Naive thymus-derived CD4-positive, alpha-beta T cell (primary cell): ENCODE measurements at regions of chr2 and their contacts with region 1.

Region 1: DNA sequence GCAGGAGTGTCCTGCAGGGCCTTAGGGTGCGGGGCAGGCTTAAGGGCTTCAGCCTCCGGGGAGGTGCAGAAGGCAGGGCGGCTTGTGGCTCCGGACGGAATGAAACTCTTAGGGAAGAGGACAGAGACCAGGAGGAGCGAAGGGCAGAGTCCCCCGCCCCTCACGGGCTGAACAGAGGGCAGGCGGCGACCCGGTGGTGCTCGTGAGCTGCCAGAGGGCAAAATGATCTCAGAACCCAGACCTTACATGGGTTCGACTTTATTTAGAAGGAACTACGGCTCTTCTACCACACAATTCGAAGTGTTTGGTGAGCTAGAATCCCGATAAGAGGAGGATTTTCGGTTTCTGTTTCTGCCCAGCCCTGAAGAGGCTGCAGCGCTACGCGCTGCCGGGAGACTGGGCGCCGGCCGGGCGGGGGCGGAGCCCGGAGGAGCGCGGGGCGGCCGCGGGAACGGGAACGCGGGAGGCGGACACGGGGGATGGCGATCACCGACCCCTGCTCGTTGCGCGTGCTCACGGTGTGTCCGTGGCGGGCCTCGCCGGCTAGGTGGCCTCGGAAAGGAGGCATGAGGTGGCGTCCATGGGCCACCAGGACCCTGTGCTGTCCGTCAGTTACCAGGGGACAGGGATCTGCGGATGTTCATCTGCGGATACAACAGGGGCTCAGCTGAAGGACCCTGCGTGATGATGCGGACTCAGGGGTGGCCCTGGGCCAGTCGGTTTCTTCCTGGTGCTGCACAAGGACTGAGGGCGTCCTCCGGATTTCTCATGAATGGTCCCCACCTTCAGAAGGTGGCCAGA is 4.2 kb upstream of the SP100 start:
- DNase-seq: peak; percentile 47 to 81 (median 61)
- ATAC-seq: peak; percentile 80
- H3K4me3 ChIP-seq: peak overlapping the region; percentile 96
- H3K4me3 Mint-ChIP-seq: peak overlapping the region; percentile 94 to 100 (median 100)
- H3K27ac ChIP-seq: peak overlapping the region; percentile 85
- H3K27ac Mint-ChIP-seq: peak overlapping the region; percentile 97 to 100 (median 99)
- H3K4me1 ChIP-seq: peaks cover 26 to 29% of the 10 kb centered on the region in 2 donors
- H3K4me1 Mint-ChIP-seq: peaks cover 30 to 92% (median 84%) of the 10 kb centered on the region in 7 donors
- H3K27me3 ChIP-seq: no peaks in the 10 kb centered on the region
- H3K27me3 Mint-ChIP-seq: no peaks in the 10 kb centered on the region

Region 2: DNA sequence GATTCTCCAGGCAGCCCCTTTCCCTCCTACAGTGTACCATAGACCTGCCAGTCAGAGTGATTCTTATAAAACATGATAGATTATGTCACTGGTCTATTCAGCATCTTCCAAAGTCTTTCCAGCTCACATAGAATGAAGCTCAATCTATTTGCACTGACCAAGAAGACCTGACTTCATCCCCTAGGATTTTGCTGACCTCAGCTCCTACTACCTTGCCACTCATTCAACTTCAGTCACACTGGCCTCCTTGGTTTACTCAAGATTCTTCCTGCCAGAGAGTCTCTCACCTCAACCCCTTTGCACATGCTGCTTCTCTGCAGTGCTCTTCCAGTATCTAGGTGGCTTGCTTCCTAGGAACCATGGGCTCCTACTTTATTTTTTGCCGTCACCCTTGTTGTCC is 1533.6 kb before region 1 on chr2:
- CTCF ChIA-PET with region 1: no interaction called
- POLR2A ChIA-PET with region 1: no interaction called
- intact Hi-C with region 1: no loop called
- DNase-seq: no peak
- ATAC-seq: no peak
- H3K4me3 ChIP-seq: no peak overlapping the region
- H3K4me3 Mint-ChIP-seq: no peak overlapping the region
- H3K27ac ChIP-seq: no peak overlapping the region
- H3K27ac Mint-ChIP-seq: peak overlapping the region in 1 of 9 donors; percentile 40
- H3K4me1 ChIP-seq: no peaks in the 10 kb centered on the region
- H3K4me1 Mint-ChIP-seq: no peaks in the 10 kb centered on the region
- H3K27me3 ChIP-seq: no peaks in the 10 kb centered on the region
- H3K27me3 Mint-ChIP-seq: no peaks in the 10 kb centered on the region

Region 3: GRCh38 chr2:229947544-229947943 is 464.2 kb before region 1 on chr2:
- CTCF ChIA-PET with region 1: no interaction called
- POLR2A ChIA-PET with region 1: no interaction called
- intact Hi-C with region 1: no loop called
- DNase-seq: no peak
- ATAC-seq: no peak
- H3K4me3 ChIP-seq: no peak overlapping the region
- H3K4me3 Mint-ChIP-seq: no peak overlapping the region
- H3K27ac ChIP-seq: no peak overlapping the region
- H3K27ac Mint-ChIP-seq: peak overlapping the region in 1 of 9 donors; percentile 4
- H3K4me1 ChIP-seq: no peaks in the 10 kb centered on the region
- H3K4me1 Mint-ChIP-seq: peaks cover 0 to 4% (median 0%) of the 10 kb centered on the region in 7 donors
- H3K27me3 ChIP-seq: no peaks in the 10 kb centered on the region
- H3K27me3 Mint-ChIP-seq: no peaks in the 10 kb centered on the region

Region 4: GRCh38 chr2:230219419-230220331 is 192.1 kb before region 1 on chr2 and contains the start of gene SP110:
- CTCF ChIA-PET with region 1: interaction called, 3 read pairs
- POLR2A ChIA-PET with region 1: interaction called, 11 read pairs
- intact Hi-C with region 1: loop called (anchors 1 to 2 kb)
- DNase-seq: peak; percentile 38 to 84 (median 81)
- ATAC-seq: peak; percentile 93
- H3K4me3 ChIP-seq: peak within 1 kb of the TSS; percentile 95
- H3K4me3 Mint-ChIP-seq: peak within 1 kb of the TSS; percentile 89 to 100 (median 99)
- H3K27ac ChIP-seq: peak within 1 kb of the TSS; percentile 83
- H3K27ac Mint-ChIP-seq: peak within 1 kb of the TSS; percentile 94 to 100 (median 99)
- H3K4me1 ChIP-seq: peaks cover 22 to 36% of the 10 kb centered on the region in 2 donors
- H3K4me1 Mint-ChIP-seq: peaks cover 44 to 75% (median 67%) of the 10 kb centered on the region in 7 donors
- H3K27me3 ChIP-seq: no peaks in the 10 kb centered on the region
- H3K27me3 Mint-ChIP-seq: no peaks in the 10 kb centered on the region
- total RNA-seq, gene SP110: 97.5 to 182 (median 117) TPM

Region 5: DNA sequence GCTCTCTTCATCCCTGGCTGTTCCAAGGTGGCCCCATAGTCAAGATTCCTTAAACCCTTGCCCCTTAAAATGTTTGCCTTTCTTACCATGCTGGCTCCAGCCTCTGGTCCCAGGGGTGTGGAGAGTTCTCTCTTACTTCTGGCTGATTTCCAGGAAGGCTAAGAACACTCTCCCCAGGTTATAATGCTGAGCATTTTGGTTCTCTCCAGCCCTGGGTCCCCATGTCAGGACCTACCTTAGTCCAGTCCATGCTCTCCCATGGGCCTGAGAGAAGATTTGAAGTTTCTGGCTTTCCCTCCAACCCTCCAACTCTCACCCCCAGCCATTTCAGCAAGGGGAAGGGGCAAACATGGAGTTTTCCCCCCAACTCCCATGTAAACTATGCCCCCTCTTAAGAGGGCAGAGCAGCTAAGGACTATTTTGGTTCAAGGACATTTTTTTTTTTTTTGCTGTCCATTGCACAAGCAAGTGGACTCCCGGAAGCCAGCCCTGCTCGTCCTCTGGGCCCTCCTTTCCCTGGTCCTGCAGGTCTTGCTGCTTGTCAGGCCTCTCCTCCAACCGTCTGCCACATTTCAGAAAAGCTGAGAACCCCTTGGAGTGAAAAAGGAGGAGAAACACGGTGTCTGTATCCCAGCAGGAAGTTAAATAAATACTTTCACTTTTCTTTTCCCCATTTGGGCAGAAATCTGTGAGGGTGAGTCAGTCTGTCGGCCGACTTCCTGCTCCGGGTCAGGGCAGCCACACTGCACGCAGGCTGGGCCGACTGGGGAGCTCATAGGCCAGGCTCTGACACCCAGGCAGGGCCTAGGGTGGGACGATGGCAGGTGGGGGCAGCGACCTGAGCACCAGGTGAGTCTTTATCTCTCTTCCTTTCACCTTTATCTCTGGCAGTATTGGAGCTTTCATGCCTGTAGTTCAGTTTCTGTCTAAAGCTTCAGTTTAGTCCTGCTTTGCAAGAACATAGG is 85.0 kb before region 1 on chr2 and contains the start of gene SP140L:
- CTCF ChIA-PET with region 1: no interaction called
- POLR2A ChIA-PET with region 1: interaction called, 14 read pairs
- intact Hi-C with region 1: loop called in 1 of 2 experiments (anchors 1 kb)
- DNase-seq: peak; percentile 48 to 83 (median 73)
- ATAC-seq: peak; percentile 99
- H3K4me3 ChIP-seq: peak within 1 kb of the TSS; percentile 86
- H3K4me3 Mint-ChIP-seq: peak within 1 kb of the TSS; percentile 90 to 100 (median 94)
- H3K27ac ChIP-seq: peak within 1 kb of the TSS; percentile 92
- H3K27ac Mint-ChIP-seq: peak within 1 kb of the TSS; percentile 95 to 99 (median 99)
- H3K4me1 ChIP-seq: peaks cover 23 to 36% of the 10 kb centered on the region in 2 donors
- H3K4me1 Mint-ChIP-seq: peaks cover 58 to 86% (median 85%) of the 10 kb centered on the region in 7 donors
- H3K27me3 ChIP-seq: no peaks in the 10 kb centered on the region
- H3K27me3 Mint-ChIP-seq: no peaks in the 10 kb centered on the region
- total RNA-seq, gene SP140L: 62.8 to 121 (median 89.5) TPM

Region 6: GRCh38 chr2:230441227-230441897 is 29.6 kb after region 1 on chr2:
- CTCF ChIA-PET with region 1: no interaction called
- POLR2A ChIA-PET with region 1: no interaction called
- intact Hi-C with region 1: loop called (anchors 1 to 2 kb)
- DNase-seq: peak in 7 of 9 donors; percentile 26 to 68 (median 46)
- ATAC-seq: peak; percentile 84
- H3K4me3 ChIP-seq: peak overlapping the region; percentile 6
- H3K4me3 Mint-ChIP-seq: peak overlapping the region; percentile 32 to 78 (median 68)
- H3K27ac ChIP-seq: peak overlapping the region; percentile 46
- H3K27ac Mint-ChIP-seq: peak overlapping the region; percentile 52 to 87 (median 76)
- H3K4me1 ChIP-seq: peaks cover 30 to 37% of the 10 kb centered on the region in 2 donors
- H3K4me1 Mint-ChIP-seq: peaks cover 33 to 69% (median 55%) of the 10 kb centered on the region in 7 donors
- H3K27me3 ChIP-seq: no peaks in the 10 kb centered on the region
- H3K27me3 Mint-ChIP-seq: no peaks in the 10 kb centered on the region

Region 7: GRCh38 chr2:230520875-230521155 is 109.0 kb after region 1 on chr2:
- CTCF ChIA-PET with region 1: no interaction called
- POLR2A ChIA-PET with region 1: no interaction called
- intact Hi-C with region 1: no loop called
- DNase-seq: no peak
- ATAC-seq: no peak
- H3K4me3 ChIP-seq: no peak overlapping the region
- H3K4me3 Mint-ChIP-seq: no peak overlapping the region
- H3K27ac ChIP-seq: no peak overlapping the region
- H3K27ac Mint-ChIP-seq: no peak overlapping the region
- H3K4me1 ChIP-seq: peaks cover 0 to 4% of the 10 kb centered on the region in 2 donors
- H3K4me1 Mint-ChIP-seq: peaks cover 0 to 16% (median 10%) of the 10 kb centered on the region in 7 donors
- H3K27me3 ChIP-seq: no peaks in the 10 kb centered on the region
- H3K27me3 Mint-ChIP-seq: no peaks in the 10 kb centered on the region

Region 8: GRCh38 chr2:230614913-230615332 is 203.2 kb after region 1 on chr2:
- CTCF ChIA-PET with region 1: interaction called, 3 read pairs
- POLR2A ChIA-PET with region 1: no interaction called
- intact Hi-C with region 1: loop called (anchors 1 to 5 kb)
- DNase-seq: peak in 2 of 9 donors; percentile 9 to 61
- ATAC-seq: peak; percentile 41
- H3K4me3 ChIP-seq: no peak overlapping the region
- H3K4me3 Mint-ChIP-seq: peak overlapping the region in 1 of 10 donors; percentile 40
- H3K27ac ChIP-seq: no peak overlapping the region
- H3K27ac Mint-ChIP-seq: peak overlapping the region in 1 of 9 donors; percentile 78
- H3K4me1 ChIP-seq: peaks cover 0 to 5% of the 10 kb centered on the region in 2 donors
- H3K4me1 Mint-ChIP-seq: peaks cover 11 to 60% (median 27%) of the 10 kb centered on the region in 7 donors
- H3K27me3 ChIP-seq: no peaks in the 10 kb centered on the region
- H3K27me3 Mint-ChIP-seq: no peaks in the 10 kb centered on the region

Region 9: DNA sequence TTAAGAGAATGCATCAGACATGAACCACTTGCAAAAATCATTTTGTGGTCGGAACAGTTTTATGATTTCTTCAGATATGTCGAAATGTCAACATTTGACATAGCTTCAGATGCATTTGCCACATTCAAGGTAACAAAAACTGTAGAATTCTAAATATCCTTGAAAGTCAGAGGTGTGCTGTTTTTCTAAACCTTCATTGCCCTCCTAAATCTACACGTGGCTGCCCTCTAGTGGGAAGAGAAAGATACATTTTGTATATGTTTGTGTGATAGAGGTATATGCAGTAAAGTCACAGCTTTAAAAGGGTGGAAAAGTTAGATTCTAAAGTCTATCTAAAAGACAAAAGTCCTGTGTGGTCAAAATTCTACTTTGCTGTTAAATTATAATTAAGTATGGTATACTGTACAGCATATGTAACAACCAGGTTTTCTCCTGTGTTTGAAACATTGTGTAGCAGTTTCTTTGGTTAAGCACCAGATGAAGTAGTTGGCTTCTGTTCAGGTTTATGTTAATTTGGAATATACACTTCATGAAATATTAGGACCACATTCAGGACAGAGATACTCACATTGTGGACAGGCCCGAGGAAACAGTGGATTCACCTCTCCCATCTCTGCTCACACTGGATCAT is 387.1 kb after region 1 on chr2:
- CTCF ChIA-PET with region 1: interaction called, 3 read pairs
- POLR2A ChIA-PET with region 1: interaction called, 5 read pairs
- intact Hi-C with region 1: loop called (anchors 10 kb)
- DNase-seq: peak in 7 of 9 donors; percentile 44 to 76 (median 69)
- ATAC-seq: peak; percentile 58
- H3K4me3 ChIP-seq: no peak overlapping the region
- H3K4me3 Mint-ChIP-seq: peak overlapping the region in 3 of 10 donors; percentile 8 to 33 (median 15)
- H3K27ac ChIP-seq: no peak overlapping the region
- H3K27ac Mint-ChIP-seq: peak overlapping the region in 4 of 9 donors; percentile 59 to 76 (median 69)
- H3K4me1 ChIP-seq: peaks cover 30 to 41% of the 10 kb centered on the region in 2 donors
- H3K4me1 Mint-ChIP-seq: peaks cover 6 to 34% (median 26%) of the 10 kb centered on the region in 7 donors
- H3K27me3 ChIP-seq: no peaks in the 10 kb centered on the region
- H3K27me3 Mint-ChIP-seq: no peaks in the 10 kb centered on the region